Heart right ventricle (tissue), 16 donors: ENCODE measurements at regions of chr2 and their contacts with region 1.

Region 1: DNA sequence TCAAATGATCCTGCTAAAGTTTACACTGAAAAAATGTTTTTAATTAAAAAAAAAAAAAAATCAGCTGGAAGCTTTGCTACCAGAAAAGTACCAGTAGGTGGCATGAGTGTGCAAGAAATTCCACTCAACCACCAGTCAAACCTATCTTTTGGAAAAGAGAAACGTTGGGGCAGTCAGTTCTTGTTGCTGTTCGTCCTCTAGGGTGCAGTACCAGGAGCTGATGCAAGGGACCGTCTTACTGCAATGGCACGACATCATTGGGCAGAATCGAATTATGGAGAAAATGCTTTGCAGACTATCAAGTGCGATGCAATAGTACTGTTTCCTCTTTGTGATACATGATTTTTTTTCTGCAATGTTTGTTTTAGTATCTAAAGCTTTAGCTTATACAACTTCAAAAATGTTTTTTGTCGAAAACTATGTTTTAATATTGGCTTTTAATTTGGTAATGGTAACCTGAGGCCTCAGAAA is 18.3 kb downstream of the YPEL5 start:
- DNase-seq: peak in 1 of 2 donors; percentile 73
- ATAC-seq: peak; percentile 73 to 92 (median 85)
- H3K4me3 ChIP-seq: no peak overlapping the region
- H3K27ac ChIP-seq: no peak overlapping the region
- H3K4me1 ChIP-seq: peaks cover 0 to 29% (median 16%) of the 10 kb centered on the region in 9 donors
- H3K27me3 ChIP-seq: no peaks in the 10 kb centered on the region
- CTCF ChIP-seq: peak; percentile 67 to 95 (median 89)

Region 2: DNA sequence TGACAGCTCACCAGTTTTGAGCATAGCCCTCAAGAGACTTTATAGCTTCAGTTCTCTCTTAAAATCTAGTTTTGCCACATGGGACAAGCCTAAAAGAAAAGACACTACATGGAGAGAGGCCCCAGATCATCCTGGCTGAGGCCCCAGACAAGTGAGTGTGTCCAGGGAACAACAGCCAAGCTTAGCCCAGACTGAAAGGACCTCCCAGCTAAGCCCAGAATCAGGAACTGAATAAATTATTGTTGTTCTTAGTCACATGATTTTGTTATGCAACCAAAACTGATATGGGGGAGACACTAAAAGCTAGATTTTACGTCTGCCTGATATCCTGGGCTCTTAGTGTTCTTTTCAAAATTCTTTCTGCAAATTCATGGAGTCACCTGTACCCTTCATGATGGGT is 36.9 kb after region 1 on chr2:
- intact Hi-C with region 1: loop called in 5 of 10 experiments (anchors 5 kb)
- DNase-seq: peak; percentile 28 to 44
- ATAC-seq: peak; percentile 49 to 90 (median 83)
- H3K4me3 ChIP-seq: no peak overlapping the region
- H3K27ac ChIP-seq: peak overlapping the region in 6 of 10 donors; percentile 36 to 72 (median 56)
- H3K4me1 ChIP-seq: peaks cover 0 to 29% (median 8%) of the 10 kb centered on the region in 9 donors
- H3K27me3 ChIP-seq: no peaks in the 10 kb centered on the region
- CTCF ChIP-seq: no peak

Region 3: GRCh38 chr2:30362468-30363081 is 197.5 kb after region 1 on chr2:
- intact Hi-C with region 1: no loop called
- DNase-seq: no peak
- ATAC-seq: no peak
- H3K4me3 ChIP-seq: no peak overlapping the region
- H3K27ac ChIP-seq: peak overlapping the region; percentile 34 to 88 (median 78)
- H3K4me1 ChIP-seq: peaks cover 18 to 80% (median 59%) of the 10 kb centered on the region in 9 donors
- H3K27me3 ChIP-seq: no peaks in the 10 kb centered on the region
- CTCF ChIP-seq: no peak

Region 4: GRCh38 chr2:30702694-30703093 is 537.6 kb after region 1 on chr2:
- intact Hi-C with region 1: loop called in 7 of 10 experiments (anchors 2 to 5 kb)
- DNase-seq: no peak
- ATAC-seq: no peak
- H3K4me3 ChIP-seq: no peak overlapping the region
- H3K27ac ChIP-seq: no peak overlapping the region
- H3K4me1 ChIP-seq: peaks cover 4 to 29% (median 15%) of the 10 kb centered on the region in 9 donors
- H3K27me3 ChIP-seq: no peaks in the 10 kb centered on the region
- CTCF ChIP-seq: no peak

Region 5: GRCh38 chr2:31170071-31170698 is 1005.1 kb after region 1 on chr2:
- intact Hi-C with region 1: loop called in 2 of 10 experiments (anchors 5 to 10 kb)
- DNase-seq: peak; percentile 29 to 51
- ATAC-seq: peak in 7 of 8 donors; percentile 63 to 92 (median 83)
- H3K4me3 ChIP-seq: no peak overlapping the region
- H3K27ac ChIP-seq: no peak overlapping the region
- H3K4me1 ChIP-seq: no peaks in the 10 kb centered on the region
- H3K27me3 ChIP-seq: peaks cover 0 to 2% (median 0%) of the 10 kb centered on the region in 7 donors
- CTCF ChIP-seq: peak; percentile 83 to 93 (median 91)